Caco-2 (cell line): ENCODE measurements at regions of chr1 and their contacts with region 1.

Region 1: GRCh38 chr1:160070243-160071163 is 543 bp upstream of the KCNJ10 start:
- DNase-seq: peak; percentile 82 to 86
- H3K4me3 ChIP-seq: peak overlapping the region; percentile 57
- H3K4me3 Mint-ChIP-seq: peak overlapping the region; percentile 92
- H3K27ac Mint-ChIP-seq: no peak overlapping the region
- H3K4me1 ChIP-seq: peaks cover 4% of the 10 kb centered on the region; the same call in 1 of the 2 replicates
- H3K4me1 Mint-ChIP-seq: no peaks in the 10 kb centered on the region
- H3K27me3 ChIP-seq: no peaks in the 10 kb centered on the region
- H3K27me3 Mint-ChIP-seq: peaks cover 15% of the 10 kb centered on the region
- CTCF ChIP-seq: no peak

Region 2: DNA sequence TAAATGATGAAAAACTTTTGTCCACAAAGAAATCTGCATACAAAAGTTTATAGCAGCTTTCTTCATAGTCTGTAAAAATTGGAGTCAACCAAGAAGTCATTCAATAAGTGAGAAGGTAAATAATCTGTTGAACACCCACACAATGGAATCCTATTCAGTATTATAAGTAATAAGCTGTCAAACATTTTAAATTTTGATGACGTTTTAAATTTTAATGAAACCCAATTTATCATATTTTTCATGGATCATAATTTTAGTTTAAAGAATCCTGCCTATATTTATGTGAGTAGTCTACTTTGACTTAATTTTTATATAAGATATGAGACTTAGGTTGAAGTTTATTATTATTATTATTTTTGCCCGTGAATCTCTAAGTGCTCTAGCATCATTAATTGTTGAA is 611.0 kb before region 1 on chr1:
- CTCF ChIA-PET with region 1: no interaction called
- POLR2A ChIA-PET with region 1: no interaction called
- intact Hi-C with region 1: no loop called
- DNase-seq: no peak
- H3K4me3 ChIP-seq: no peak overlapping the region
- H3K4me3 Mint-ChIP-seq: no peak overlapping the region
- H3K27ac Mint-ChIP-seq: no peak overlapping the region
- H3K4me1 ChIP-seq: no peaks in the 10 kb centered on the region
- H3K4me1 Mint-ChIP-seq: no peaks in the 10 kb centered on the region
- H3K27me3 ChIP-seq: no peaks in the 10 kb centered on the region
- H3K27me3 Mint-ChIP-seq: no peaks in the 10 kb centered on the region
- CTCF ChIP-seq: no peak

Region 3: GRCh38 chr1:159879977-159880376 is 190.5 kb before region 1 on chr1:
- CTCF ChIA-PET with region 1: no interaction called
- POLR2A ChIA-PET with region 1: no interaction called
- intact Hi-C with region 1: no loop called
- DNase-seq: no peak
- H3K4me3 ChIP-seq: no peak overlapping the region
- H3K4me3 Mint-ChIP-seq: no peak overlapping the region
- H3K27ac Mint-ChIP-seq: no peak overlapping the region
- H3K4me1 ChIP-seq: no peaks in the 10 kb centered on the region
- H3K4me1 Mint-ChIP-seq: no peaks in the 10 kb centered on the region
- H3K27me3 ChIP-seq: no peaks in the 10 kb centered on the region
- H3K27me3 Mint-ChIP-seq: no peaks in the 10 kb centered on the region
- CTCF ChIP-seq: no peak

Region 4: GRCh38 chr1:160046494-160047110 is 23.9 kb before region 1 on chr1:
- CTCF ChIA-PET with region 1: interaction called, 4 read pairs
- POLR2A ChIA-PET with region 1: no interaction called
- intact Hi-C with region 1: loop called (anchors 2 kb)
- DNase-seq: peak in 1 of 2 experiments; percentile 52
- H3K4me3 ChIP-seq: no peak overlapping the region
- H3K4me3 Mint-ChIP-seq: no peak overlapping the region
- H3K27ac Mint-ChIP-seq: no peak overlapping the region
- H3K4me1 ChIP-seq: no peaks in the 10 kb centered on the region
- H3K4me1 Mint-ChIP-seq: peaks cover 18% of the 10 kb centered on the region
- H3K27me3 ChIP-seq: no peaks in the 10 kb centered on the region
- H3K27me3 Mint-ChIP-seq: peaks cover 16% of the 10 kb centered on the region
- CTCF ChIP-seq: peak; percentile 57 to 62

Region 5: GRCh38 chr1:160058087-160058486 is 12.4 kb before region 1 on chr1:
- CTCF ChIA-PET with region 1: interaction called, 3 read pairs
- POLR2A ChIA-PET with region 1: no interaction called
- intact Hi-C with region 1: loop called (anchors 1 kb)
- DNase-seq: no peak
- H3K4me3 ChIP-seq: no peak overlapping the region
- H3K4me3 Mint-ChIP-seq: no peak overlapping the region
- H3K27ac Mint-ChIP-seq: no peak overlapping the region
- H3K4me1 ChIP-seq: peaks cover 9% of the 10 kb centered on the region
- H3K4me1 Mint-ChIP-seq: no peaks in the 10 kb centered on the region
- H3K27me3 ChIP-seq: no peaks in the 10 kb centered on the region
- H3K27me3 Mint-ChIP-seq: peaks cover 10% of the 10 kb centered on the region
- CTCF ChIP-seq: peak in 1 of 2 experiments; percentile 15